Panc1 (cell line): ENCODE measurements at regions of chr12 and their contacts with region 1.

Region 1: GRCh38 chr12:85575120-85576096 is 260.8 kb downstream of the RASSF9 start:
- DNase-seq: peak; percentile 25
- ATAC-seq: peak; percentile 87
- H3K4me3 ChIP-seq: no peak overlapping the region
- H3K27ac ChIP-seq: no peak overlapping the region
- H3K4me1 ChIP-seq: no peaks in the 10 kb centered on the region
- H3K27me3 ChIP-seq: no peaks in the 10 kb centered on the region
- CTCF ChIP-seq: peak; percentile 73

Region 2: GRCh38 chr12:85476756-85477155 is 98.7 kb before region 1 on chr12:
- CTCF ChIA-PET with region 1: no interaction called
- POLR2A ChIA-PET with region 1: no interaction called
- in situ Hi-C with region 1: no loop called
- intact Hi-C with region 1: loop called (anchors 10 kb)
- DNase-seq: no peak
- ATAC-seq: no peak
- H3K4me3 ChIP-seq: no peak overlapping the region
- H3K27ac ChIP-seq: no peak overlapping the region
- H3K4me1 ChIP-seq: no peaks in the 10 kb centered on the region
- H3K27me3 ChIP-seq: no peaks in the 10 kb centered on the region
- CTCF ChIP-seq: no peak

Region 3: DNA sequence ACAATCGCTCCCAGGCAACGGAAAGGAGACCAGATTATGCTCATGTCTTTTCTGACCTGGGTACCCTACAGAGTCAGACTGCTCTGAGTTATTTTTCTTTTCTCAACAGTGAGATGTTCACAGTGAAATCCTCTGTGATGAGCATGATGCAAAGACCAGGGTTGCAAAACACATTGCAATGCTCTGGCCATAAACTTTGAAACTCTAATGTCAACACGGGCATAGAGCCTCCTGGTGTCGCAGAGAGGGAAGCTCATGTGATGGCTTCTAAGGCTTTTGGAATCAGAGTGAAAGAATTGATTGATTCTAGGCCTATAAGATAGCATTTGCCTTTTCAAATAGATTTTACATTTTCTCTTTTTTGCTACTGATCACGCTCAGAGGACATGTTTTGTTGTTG is 67.4 kb after region 1 on chr12:
- CTCF ChIA-PET with region 1: no interaction called
- POLR2A ChIA-PET with region 1: no interaction called
- in situ Hi-C with region 1: no loop called
- intact Hi-C with region 1: no loop called
- DNase-seq: no peak
- ATAC-seq: no peak
- H3K4me3 ChIP-seq: no peak overlapping the region
- H3K27ac ChIP-seq: no peak overlapping the region
- H3K4me1 ChIP-seq: no peaks in the 10 kb centered on the region
- H3K27me3 ChIP-seq: no peaks in the 10 kb centered on the region
- CTCF ChIP-seq: no peak

Region 4: GRCh38 chr12:85866986-85867776 is 291.8 kb after region 1 on chr12:
- CTCF ChIA-PET with region 1: interaction called, 6 read pairs
- POLR2A ChIA-PET with region 1: no interaction called
- in situ Hi-C with region 1: no loop called
- intact Hi-C with region 1: loop called (anchors 2 kb)
- DNase-seq: peak; percentile 22
- ATAC-seq: peak; percentile 72; the same call in 1 of the 2 replicates
- H3K4me3 ChIP-seq: no peak overlapping the region
- H3K27ac ChIP-seq: no peak overlapping the region
- H3K4me1 ChIP-seq: no peaks in the 10 kb centered on the region
- H3K27me3 ChIP-seq: no peaks in the 10 kb centered on the region
- CTCF ChIP-seq: peak; percentile 72